ENCODE measurements at regions of chr15 and their contacts with region 1.

Region 1: DNA sequence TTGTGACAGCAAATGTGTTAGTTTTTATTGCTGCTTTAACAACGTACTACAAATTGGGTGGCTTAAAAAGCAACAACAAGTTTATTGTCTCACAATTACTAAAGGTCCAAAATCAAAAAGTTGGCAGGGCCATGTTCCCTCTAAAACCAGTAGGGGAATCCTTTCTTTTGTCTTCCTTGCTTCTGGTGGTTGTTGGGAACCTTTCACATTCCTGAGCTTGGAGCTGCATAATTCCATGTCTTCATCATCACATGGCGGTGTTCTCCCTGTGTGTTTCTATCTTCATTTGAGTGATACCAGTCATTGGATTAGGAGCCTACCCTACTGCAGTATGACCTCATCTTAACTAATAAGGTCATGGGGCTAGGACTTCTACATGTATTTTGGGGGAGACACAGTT is 7.4 kb downstream of the SPRED1 start:
- DNase-seq: no peak
- ATAC-seq: no peak

Region 2: GRCh38 chr15:38300395-38300794 is 40.3 kb after region 1 on chr15:
- intact Hi-C with region 1: loop called (anchors 5 to 10 kb)
- DNase-seq: no peak
- ATAC-seq: no peak

Measured in left cardiac atrium (tissue), 4 donors.